Endothelial cell of umbilical vein (primary cell): ENCODE measurements at regions of chr15 and their contacts with region 1.

Region 1: GRCh38 chr15:70826634-70827033 is 27.3 kb downstream of the LARP6 start:
- DNase-seq: peak; percentile 36
- H3K4me3 ChIP-seq: no peak overlapping the region
- H3K27ac ChIP-seq: no peak overlapping the region
- H3K4me1 ChIP-seq: no peaks in the 10 kb centered on the region
- H3K27me3 ChIP-seq: no peaks in the 10 kb centered on the region
- CTCF ChIP-seq: no peak
- POLR2A ChIP-seq: no peak

Region 2: DNA sequence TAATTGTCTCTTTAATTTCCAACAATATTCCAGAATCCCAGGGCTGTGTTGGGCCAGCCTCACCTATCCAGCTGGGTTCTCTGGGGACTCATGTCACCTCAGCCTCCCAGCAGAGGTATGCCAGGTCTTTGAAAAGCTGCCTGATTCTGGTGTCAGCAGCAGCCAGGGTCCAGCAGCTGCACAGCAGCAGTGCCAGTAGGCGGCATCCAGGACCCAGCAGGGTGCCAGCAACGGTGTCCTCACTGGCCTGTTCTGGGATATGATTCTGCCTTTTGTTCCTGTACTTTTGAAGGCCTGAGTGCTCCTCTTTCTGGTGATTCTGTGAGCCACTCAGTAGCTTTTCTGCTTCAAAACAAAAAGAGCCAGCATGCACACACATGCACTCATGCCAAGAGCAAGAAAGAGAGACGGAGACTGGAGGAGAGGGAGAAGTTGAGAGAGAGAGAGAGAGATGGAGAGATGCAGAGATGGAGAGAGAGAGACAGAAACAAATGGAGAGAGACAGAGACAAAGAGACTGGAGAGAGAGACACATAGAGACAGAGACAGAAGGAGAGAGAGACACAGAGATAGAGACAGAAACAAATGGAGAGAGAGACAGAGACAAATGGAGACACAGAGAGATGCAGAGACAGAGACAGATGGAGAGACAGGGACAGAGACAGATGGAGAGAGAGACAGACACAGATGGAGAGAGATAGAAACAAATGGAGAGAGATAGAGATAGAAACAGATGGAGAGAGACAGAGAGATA is 269.0 kb before region 1 on chr15:
- CTCF ChIA-PET with region 1: no interaction called
- POLR2A ChIA-PET with region 1: no interaction called
- dilution Hi-C with region 1: no loop called
- intact Hi-C with region 1: no loop called
- DNase-seq: no peak
- H3K4me3 ChIP-seq: no peak overlapping the region
- H3K27ac ChIP-seq: no peak overlapping the region
- H3K4me1 ChIP-seq: no peaks in the 10 kb centered on the region
- H3K27me3 ChIP-seq: peaks cover 0 to 8% of the 10 kb centered on the region in 2 experiments
- CTCF ChIP-seq: no peak
- POLR2A ChIP-seq: no peak

Region 3: DNA sequence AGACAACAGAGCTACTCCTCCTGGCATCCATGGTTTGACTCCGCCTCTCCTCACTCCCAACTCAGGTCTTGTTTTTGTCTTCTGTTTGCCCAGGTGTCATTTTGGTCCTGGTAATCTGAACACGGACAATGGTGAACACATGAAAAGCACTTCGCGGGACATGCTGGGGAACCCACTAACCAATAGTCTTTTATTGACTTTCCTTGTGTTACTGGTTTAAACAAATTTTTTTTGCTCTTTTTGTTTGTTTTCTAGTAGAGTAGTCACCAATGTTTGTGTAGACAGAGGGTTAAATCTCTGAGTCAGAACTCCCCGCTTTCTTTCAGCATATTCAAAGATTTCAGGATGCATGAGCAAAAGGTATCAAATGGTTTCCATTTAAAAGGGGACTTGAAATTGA is 11.0 kb before region 1 on chr15:
- CTCF ChIA-PET with region 1: interaction called, 32 read pairs
- POLR2A ChIA-PET with region 1: no interaction called
- dilution Hi-C with region 1: no loop called
- intact Hi-C with region 1: no loop called
- DNase-seq: no peak
- H3K4me3 ChIP-seq: no peak overlapping the region
- H3K27ac ChIP-seq: no peak overlapping the region
- H3K4me1 ChIP-seq: peaks cover 9% of the 10 kb centered on the region
- H3K27me3 ChIP-seq: no peaks in the 10 kb centered on the region
- CTCF ChIP-seq: no peak
- POLR2A ChIP-seq: no peak

Region 4: DNA sequence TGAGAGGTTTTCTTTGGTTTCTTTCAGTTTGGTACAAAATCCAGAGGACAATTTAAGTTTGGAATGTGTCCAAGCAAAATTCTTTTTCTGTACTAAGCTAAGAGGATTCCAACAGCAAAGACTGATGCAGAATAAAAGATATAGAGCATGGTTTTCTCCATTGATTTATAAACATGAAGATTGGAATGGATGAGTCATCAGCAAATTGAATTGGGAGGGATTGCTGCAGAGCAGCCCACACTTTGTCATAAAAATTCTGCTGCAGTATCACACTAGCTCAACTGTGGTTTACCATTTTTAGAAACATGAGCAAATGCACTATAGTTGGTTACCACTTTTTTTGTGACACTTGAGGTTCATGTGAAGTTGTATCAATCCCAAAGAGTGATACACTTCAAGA is 43.4 kb after region 1 on chr15:
- CTCF ChIA-PET with region 1: interaction called, 160 read pairs
- POLR2A ChIA-PET with region 1: no interaction called
- dilution Hi-C with region 1: no loop called
- intact Hi-C with region 1: loop called (anchors 1 kb)
- DNase-seq: peak; percentile 31
- H3K4me3 ChIP-seq: no peak overlapping the region
- H3K27ac ChIP-seq: no peak overlapping the region
- H3K4me1 ChIP-seq: no peaks in the 10 kb centered on the region
- H3K27me3 ChIP-seq: no peaks in the 10 kb centered on the region
- CTCF ChIP-seq: no peak
- POLR2A ChIP-seq: no peak

Region 5: GRCh38 chr15:70892002-70892914 is 65.6 kb after region 1 on chr15 and contains the starts of genes LRRC49 and THAP10:
- CTCF ChIA-PET with region 1: interaction called, 9 read pairs
- POLR2A ChIA-PET with region 1: no interaction called
- dilution Hi-C with region 1: no loop called
- intact Hi-C with region 1: loop called (anchors 1 kb)
- DNase-seq: peak; percentile 98
- H3K4me3 ChIP-seq: peak within 1 kb of the TSS; percentile 47 to 81 (median 69)
- H3K27ac ChIP-seq: peak within 1 kb of the TSS; percentile 86
- H3K4me1 ChIP-seq: peaks cover 17% of the 10 kb centered on the region
- H3K27me3 ChIP-seq: no peaks in the 10 kb centered on the region
- CTCF ChIP-seq: no peak
- POLR2A ChIP-seq: no peak
- total RNA-seq, gene LRRC49: 6.6 and 7.4 TPM in 2 replicates
- total RNA-seq, gene THAP10: 2.7 and 4.0 TPM in 2 replicates

Region 6: DNA sequence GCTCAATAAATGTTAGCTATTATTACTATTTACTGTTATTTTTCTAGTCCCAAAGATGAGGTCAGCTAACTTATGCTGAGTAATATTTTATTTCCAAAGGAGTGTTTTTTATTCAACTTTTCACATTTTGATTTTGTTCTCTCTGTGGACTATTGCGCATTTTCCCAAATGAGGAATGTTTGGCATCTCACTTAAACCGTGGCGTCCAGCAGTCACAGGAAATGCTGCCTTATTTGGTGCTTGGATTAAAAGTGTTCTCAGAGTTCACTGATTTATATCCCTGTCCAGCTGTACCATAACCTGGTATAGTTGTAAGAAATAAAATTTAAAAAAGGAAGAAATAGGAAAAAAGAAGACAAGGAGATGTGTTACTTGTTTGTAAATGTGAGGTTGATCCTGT is 455.4 kb after region 1 on chr15:
- CTCF ChIA-PET with region 1: no interaction called
- POLR2A ChIA-PET with region 1: no interaction called
- dilution Hi-C with region 1: no loop called
- intact Hi-C with region 1: no loop called
- DNase-seq: no peak
- H3K4me3 ChIP-seq: no peak overlapping the region
- H3K27ac ChIP-seq: no peak overlapping the region
- H3K4me1 ChIP-seq: peaks cover 22% of the 10 kb centered on the region
- H3K27me3 ChIP-seq: no peaks in the 10 kb centered on the region
- CTCF ChIP-seq: no peak
- POLR2A ChIP-seq: no peak